Right cardiac atrium (tissue), 5 donors: ENCODE measurements at regions of chr17 and their contacts with region 1.

Region 1: DNA sequence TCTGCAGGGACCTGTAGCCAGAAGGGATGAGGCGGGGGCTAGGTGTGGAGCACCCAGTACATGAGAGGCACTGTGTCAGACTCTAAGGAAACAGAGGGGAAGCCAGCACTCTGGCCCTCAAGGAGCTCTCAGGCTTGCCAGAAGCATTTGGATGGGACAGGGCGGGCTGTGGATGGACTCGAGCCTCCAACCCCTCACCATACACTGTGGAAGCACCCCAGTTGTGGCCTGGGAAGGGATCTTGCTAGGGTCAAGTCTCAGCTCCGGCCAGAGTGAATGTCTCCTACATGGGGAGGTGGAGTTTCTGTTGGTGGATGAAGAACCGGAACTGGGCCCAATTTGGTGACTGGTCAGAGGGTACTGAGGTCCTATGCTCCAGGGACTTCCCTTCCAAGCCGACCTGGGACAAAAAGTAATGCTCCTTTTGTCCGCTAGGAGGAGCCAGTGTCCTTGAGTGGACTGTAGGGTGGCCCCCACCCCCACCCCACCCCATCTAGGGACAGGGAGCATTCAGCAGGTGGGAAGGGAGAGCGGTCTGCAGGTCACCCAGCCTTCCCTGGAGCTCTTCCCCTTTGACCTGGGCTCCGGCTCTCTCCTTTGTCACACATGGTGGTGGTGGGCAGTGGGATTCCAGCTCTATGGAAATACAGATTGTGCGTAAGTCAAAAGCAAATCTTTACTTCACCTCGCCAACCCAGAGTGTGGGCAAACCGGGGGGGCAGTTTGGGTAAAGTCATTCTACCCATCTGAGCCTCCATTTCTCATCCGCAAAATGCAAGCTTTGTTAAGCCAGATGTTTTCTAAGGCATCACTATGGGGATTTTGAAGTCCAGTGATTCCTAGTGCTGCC is 20.4 kb upstream of the PHB1 start:
- DNase-seq: peak in 1 of 3 donors; percentile 56
- ATAC-seq: peak; percentile 30 to 63
- H3K4me3 ChIP-seq: no peak overlapping the region
- H3K27ac ChIP-seq: no peak overlapping the region
- H3K4me1 ChIP-seq: no peaks in the 10 kb centered on the region
- H3K27me3 ChIP-seq: no peaks in the 10 kb centered on the region

Region 2: GRCh38 chr17:49230636-49231562 is 204.1 kb before region 1 on chr17 and contains the start of gene PHOSPHO1:
- intact Hi-C with region 1: no loop called
- DNase-seq: peak; percentile 89 to 95 (median 94)
- ATAC-seq: peak; percentile 94 to 96
- H3K4me3 ChIP-seq: peak within 1 kb of the TSS; percentile 63
- H3K27ac ChIP-seq: no peak within 1 kb of the TSS
- H3K4me1 ChIP-seq: no peaks in the 10 kb centered on the region
- H3K27me3 ChIP-seq: no peaks in the 10 kb centered on the region
- total RNA-seq, gene PHOSPHO1: 0.39 to 0.99 (median 0.62) TPM

Region 3: GRCh38 chr17:49401971-49402611 is 33.0 kb before region 1 on chr17:
- intact Hi-C with region 1: no loop called
- DNase-seq: no peak
- ATAC-seq: no peak
- H3K4me3 ChIP-seq: no peak overlapping the region
- H3K27ac ChIP-seq: no peak overlapping the region
- H3K4me1 ChIP-seq: no peaks in the 10 kb centered on the region
- H3K27me3 ChIP-seq: no peaks in the 10 kb centered on the region

Region 4: GRCh38 chr17:49548506-49549310 is 113.7 kb after region 1 on chr17:
- intact Hi-C with region 1: loop called in 1 of 4 experiments (anchors 2 kb)
- DNase-seq: peak; percentile 68 to 89 (median 82)
- ATAC-seq: peak; percentile 59 to 65
- H3K4me3 ChIP-seq: no peak overlapping the region
- H3K27ac ChIP-seq: no peak overlapping the region
- H3K4me1 ChIP-seq: no peaks in the 10 kb centered on the region
- H3K27me3 ChIP-seq: no peaks in the 10 kb centered on the region

Region 5: GRCh38 chr17:49556223-49556971 is 121.4 kb after region 1 on chr17:
- intact Hi-C with region 1: loop called (anchors 2 to 5 kb)
- DNase-seq: peak; percentile 81 to 93 (median 92)
- ATAC-seq: peak; percentile 89 to 90
- H3K4me3 ChIP-seq: no peak overlapping the region
- H3K27ac ChIP-seq: no peak overlapping the region
- H3K4me1 ChIP-seq: no peaks in the 10 kb centered on the region
- H3K27me3 ChIP-seq: no peaks in the 10 kb centered on the region